ENCODE measurements at regions of chr2 and their contacts with region 1.

Region 1: GRCh38 chr2:100262555-100263320 is 59.6 kb downstream of the LONRF2 start:
- DNase-seq: peak; percentile 78
- H3K4me3 ChIP-seq: peak overlapping the region in 1 of 2 experiments; percentile 33; a peak in 1 of 4 replicates
- H3K27ac ChIP-seq: no peak overlapping the region
- H3K4me1 ChIP-seq: peaks cover 0 to 3% of the 10 kb centered on the region in 2 experiments; a peak in 1 of 4 replicates
- H3K27me3 ChIP-seq: no peaks in the 10 kb centered on the region
- CTCF ChIP-seq: peak; percentile 97
- EP300 ChIP-seq: no peak
- RAD21 ChIP-seq: peak; percentile 95

Region 2: DNA sequence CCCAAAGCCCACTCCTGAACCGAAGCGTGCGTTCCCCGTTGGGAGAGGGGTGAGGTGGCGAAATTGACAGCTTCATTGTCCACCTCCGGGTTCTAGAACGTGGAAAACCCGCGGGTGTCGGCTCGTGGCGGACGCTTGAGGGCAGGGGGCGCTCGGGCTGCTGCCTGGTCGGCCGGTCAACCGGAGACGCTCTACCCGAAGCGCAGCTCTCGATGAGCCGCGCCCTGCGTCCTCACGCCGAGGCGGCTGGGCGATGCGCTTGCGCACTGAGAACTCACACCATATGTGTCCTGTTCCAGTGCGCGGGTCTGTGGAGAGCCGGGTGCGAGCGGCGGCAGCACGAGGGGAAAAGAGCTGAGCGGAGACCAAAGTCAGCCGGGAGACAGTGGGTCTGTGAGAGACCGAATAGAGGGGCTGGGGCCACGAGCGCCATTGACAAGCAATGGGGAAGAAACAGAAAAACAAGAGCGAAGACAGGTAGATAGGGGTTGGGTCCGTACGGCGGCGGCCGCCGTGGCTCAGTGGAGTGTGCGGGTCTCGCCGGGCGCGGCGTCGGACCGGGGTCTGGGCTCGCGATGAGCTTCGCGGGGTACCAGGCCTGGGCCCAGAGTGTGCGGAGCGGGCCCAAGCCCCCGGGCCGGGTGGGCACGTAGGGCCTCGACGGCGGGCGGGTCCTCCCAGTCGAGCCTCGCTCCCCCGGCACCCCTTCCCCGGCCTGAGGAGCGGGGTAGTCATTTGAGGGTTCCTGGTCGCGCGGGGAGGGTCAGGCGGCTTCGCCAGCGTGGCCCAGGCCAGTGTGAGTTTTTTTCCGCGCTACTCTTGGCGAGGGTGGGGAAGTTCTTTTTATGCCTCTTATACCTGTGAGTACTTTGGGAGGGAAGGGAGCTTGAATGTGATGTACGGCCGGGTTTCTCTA is 925.4 kb before region 1 on chr2 and contains the start of gene EIF5B:
- CTCF ChIA-PET with region 1: interaction called, 25 read pairs
- POLR2A ChIA-PET with region 1: no interaction called
- DNase-seq: peak; percentile 94
- H3K4me3 ChIP-seq: peak within 1 kb of the TSS; percentile 81 to 96
- H3K27ac ChIP-seq: peak within 1 kb of the TSS; percentile 82 to 91
- H3K4me1 ChIP-seq: peaks cover 0 to 6% of the 10 kb centered on the region in 2 experiments; a peak in 2 of 4 replicates
- H3K27me3 ChIP-seq: no peaks in the 10 kb centered on the region
- CTCF ChIP-seq: peak; percentile 76
- EP300 ChIP-seq: no peak
- RAD21 ChIP-seq: no peak; the same call in 1 of the 2 replicates
- polyA plus RNA-seq, gene EIF5B: 8.7 and 9.8 TPM in 2 replicates

Region 3: DNA sequence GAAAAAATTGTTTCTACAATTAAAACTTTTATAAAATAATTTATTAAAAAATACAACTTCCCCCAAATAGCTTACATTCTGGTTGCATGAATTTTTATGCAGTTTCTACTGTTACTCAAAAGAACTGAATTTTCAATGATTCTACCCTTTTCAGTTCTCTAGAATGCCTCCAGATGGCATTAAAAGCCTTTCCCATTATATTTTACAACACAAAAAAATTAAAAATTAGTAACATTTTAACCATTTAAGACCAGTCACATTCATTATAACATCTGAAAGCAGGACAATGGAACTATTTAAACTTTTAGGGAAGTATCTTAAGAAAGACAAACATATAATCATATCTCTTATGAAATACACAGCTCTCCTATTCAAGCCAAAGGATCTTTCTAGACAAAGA is 536.9 kb before region 1 on chr2:
- CTCF ChIA-PET with region 1: interaction called, 46 read pairs
- POLR2A ChIA-PET with region 1: no interaction called
- DNase-seq: peak; percentile 19
- H3K4me3 ChIP-seq: no peak overlapping the region
- H3K27ac ChIP-seq: peak overlapping the region in 1 of 2 experiments; percentile 67; a peak in 1 of 4 replicates
- H3K4me1 ChIP-seq: peaks cover 0 to 15% of the 10 kb centered on the region in 2 experiments; a peak in 2 of 4 replicates
- H3K27me3 ChIP-seq: no peaks in the 10 kb centered on the region
- CTCF ChIP-seq: peak; percentile 70
- EP300 ChIP-seq: no peak
- RAD21 ChIP-seq: peak; percentile 65

Region 4: GRCh38 chr2:100242891-100243619 is 19.7 kb before region 1 on chr2:
- CTCF ChIA-PET with region 1: interaction called, 102 read pairs
- POLR2A ChIA-PET with region 1: no interaction called
- DNase-seq: peak; percentile 83
- H3K4me3 ChIP-seq: no peak overlapping the region; a peak in 1 of 4 replicates
- H3K27ac ChIP-seq: no peak overlapping the region
- H3K4me1 ChIP-seq: peaks cover 0 to 12% of the 10 kb centered on the region in 2 experiments; a peak in 1 of 4 replicates
- H3K27me3 ChIP-seq: no peaks in the 10 kb centered on the region
- CTCF ChIP-seq: peak; percentile 74
- EP300 ChIP-seq: no peak
- RAD21 ChIP-seq: peak; percentile 97

Region 5: DNA sequence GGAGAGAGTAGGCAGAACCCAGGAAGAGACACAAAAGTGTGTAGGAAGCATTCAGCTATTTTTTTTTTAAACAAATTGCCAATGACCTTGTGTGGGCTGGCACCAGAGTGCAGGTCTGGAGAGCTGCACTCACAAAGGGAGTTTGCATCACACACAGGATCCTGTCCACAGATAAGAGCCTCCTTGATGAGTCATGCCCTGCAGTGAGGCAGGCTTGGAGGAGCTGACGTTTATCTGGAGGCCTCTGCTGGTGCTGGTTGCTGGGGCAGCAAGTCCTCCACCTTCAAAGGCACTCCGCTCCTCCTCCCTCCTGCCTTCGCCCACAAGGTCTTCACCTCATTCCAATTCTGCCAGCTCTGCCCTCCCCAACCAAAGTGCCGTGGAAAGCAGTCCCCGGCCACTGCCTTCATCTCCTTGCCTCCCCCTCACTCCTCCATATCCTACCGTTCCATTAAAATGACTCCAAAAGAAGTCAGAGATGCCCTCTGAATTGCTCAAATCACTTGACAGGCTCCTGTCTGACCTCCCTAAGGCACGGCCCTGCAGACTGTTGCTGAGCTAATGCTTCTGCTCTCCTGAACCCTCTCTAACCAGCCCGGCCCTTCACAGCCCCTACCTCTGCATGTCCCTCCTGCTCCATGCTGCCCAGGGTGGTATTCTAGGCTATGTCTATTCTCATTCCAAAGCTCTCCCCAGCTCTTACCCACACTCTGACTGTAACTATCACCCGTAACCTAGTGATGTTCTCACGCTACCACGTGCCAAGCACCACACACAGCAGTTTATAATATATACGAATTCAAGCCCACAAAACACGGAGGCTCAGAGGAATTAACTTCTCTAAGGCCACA is 28.6 kb after region 1 on chr2:
- CTCF ChIA-PET with region 1: interaction called, 58 read pairs
- POLR2A ChIA-PET with region 1: no interaction called
- DNase-seq: peak; percentile 67
- H3K4me3 ChIP-seq: no peak overlapping the region
- H3K27ac ChIP-seq: peak overlapping the region; percentile 86 to 97
- H3K4me1 ChIP-seq: peaks cover 26 to 39% of the 10 kb centered on the region in 2 experiments
- H3K27me3 ChIP-seq: no peaks in the 10 kb centered on the region
- CTCF ChIP-seq: no peak
- EP300 ChIP-seq: peak; percentile 70 to 86; a peak in 3 of 4 replicates
- RAD21 ChIP-seq: no peak

Region 6: GRCh38 chr2:100365434-100365833 is 102.7 kb after region 1 on chr2:
- CTCF ChIA-PET with region 1: interaction called, 53 read pairs
- POLR2A ChIA-PET with region 1: no interaction called
- DNase-seq: no peak
- H3K4me3 ChIP-seq: no peak overlapping the region
- H3K27ac ChIP-seq: no peak overlapping the region
- H3K4me1 ChIP-seq: no peaks in the 10 kb centered on the region; a peak in 1 of 4 replicates
- H3K27me3 ChIP-seq: no peaks in the 10 kb centered on the region
- CTCF ChIP-seq: no peak
- EP300 ChIP-seq: no peak
- RAD21 ChIP-seq: no peak

Measured in SK-N-SH (cell line).